HCT116 (cell line): ENCODE measurements at regions of chr10 and their contacts with region 1.

Region 1: GRCh38 chr10:90592638-90593302 is 265.1 kb downstream of the HTR7 start:
- DNase-seq: peak; percentile 68
- ATAC-seq: peak; percentile 85
- H3K4me3 ChIP-seq: no peak overlapping the region
- H3K27ac ChIP-seq: peak overlapping the region; percentile 81
- H3K4me1 ChIP-seq: peaks cover 34 to 56% of the 10 kb centered on the region in 2 experiments
- H3K27me3 ChIP-seq: no peaks in the 10 kb centered on the region
- CTCF ChIP-seq: peak; percentile 65 to 76 (median 71); a peak in 5 of 6 replicates
- POLR2A ChIP-seq: no peak
- RAD21 ChIP-seq: peak; percentile 96

Region 2: DNA sequence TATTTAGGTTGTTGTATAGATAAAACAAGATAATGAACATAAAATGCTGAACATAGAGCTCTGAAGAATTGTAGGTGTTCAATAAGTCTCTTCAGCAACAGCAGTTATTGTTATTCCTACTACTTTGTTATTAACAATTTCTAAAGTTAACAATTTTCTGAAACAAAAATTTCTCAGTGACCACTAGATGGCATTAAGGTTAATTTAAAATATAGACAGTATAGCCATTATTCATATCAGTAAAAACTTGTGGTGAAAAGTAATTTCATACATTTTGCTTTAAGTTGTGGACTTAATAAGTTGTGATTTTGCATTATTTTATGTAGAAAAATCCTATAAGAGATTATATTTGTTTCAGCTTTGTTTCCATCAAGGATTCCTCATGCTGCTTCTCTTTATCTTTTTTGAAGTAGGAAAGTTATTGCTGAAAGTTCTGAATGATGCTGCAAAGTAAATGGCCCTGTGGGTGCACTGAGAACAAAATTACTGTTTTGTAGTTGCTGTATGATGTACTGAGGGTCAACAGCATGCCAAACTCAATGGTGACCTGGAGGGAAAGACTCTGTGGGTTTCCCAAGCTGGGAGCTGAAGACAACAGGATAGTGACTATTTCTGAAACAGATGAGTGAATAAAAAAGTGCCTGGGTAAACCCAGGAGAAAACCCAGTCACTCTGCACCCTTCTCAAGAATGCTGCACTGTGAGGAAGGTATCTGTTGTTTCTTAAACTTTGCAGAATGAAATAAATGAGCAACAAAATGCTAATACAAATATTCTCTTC is 637.8 kb before region 1 on chr10:
- CTCF ChIA-PET with region 1: no interaction called
- POLR2A ChIA-PET with region 1: no interaction called
- RAD21 ChIA-PET with region 1: no interaction called
- intact Hi-C with region 1: loop called (anchors 2 kb)
- DNase-seq: no peak
- ATAC-seq: no peak
- H3K4me3 ChIP-seq: no peak overlapping the region
- H3K27ac ChIP-seq: peak overlapping the region; percentile 31; the same call in 1 of the 2 replicates
- H3K4me1 ChIP-seq: peaks cover 0 to 7% of the 10 kb centered on the region in 2 experiments; a peak in 2 of 4 replicates
- H3K27me3 ChIP-seq: no peaks in the 10 kb centered on the region
- CTCF ChIP-seq: peak; percentile 18 to 64 (median 37); a peak in 4 of 6 replicates
- POLR2A ChIP-seq: no peak
- RAD21 ChIP-seq: peak; percentile 59

Region 3: GRCh38 chr10:90148116-90148855 is 444.5 kb before region 1 on chr10:
- CTCF ChIA-PET with region 1: interaction called, 24 read pairs
- POLR2A ChIA-PET with region 1: no interaction called
- RAD21 ChIA-PET with region 1: interaction called, 6 to 7 read pairs
- intact Hi-C with region 1: loop called (anchors 1 kb)
- DNase-seq: peak; percentile 71
- ATAC-seq: peak; percentile 82
- H3K4me3 ChIP-seq: peak overlapping the region in 1 of 2 experiments; percentile 6; a peak in 1 of 4 replicates
- H3K27ac ChIP-seq: peak overlapping the region; percentile 90
- H3K4me1 ChIP-seq: peaks cover 38 to 52% of the 10 kb centered on the region in 2 experiments
- H3K27me3 ChIP-seq: no peaks in the 10 kb centered on the region
- CTCF ChIP-seq: peak; percentile 50 to 76 (median 75); a peak in 5 of 6 replicates
- POLR2A ChIP-seq: no peak
- RAD21 ChIP-seq: peak; percentile 90

Region 4: DNA sequence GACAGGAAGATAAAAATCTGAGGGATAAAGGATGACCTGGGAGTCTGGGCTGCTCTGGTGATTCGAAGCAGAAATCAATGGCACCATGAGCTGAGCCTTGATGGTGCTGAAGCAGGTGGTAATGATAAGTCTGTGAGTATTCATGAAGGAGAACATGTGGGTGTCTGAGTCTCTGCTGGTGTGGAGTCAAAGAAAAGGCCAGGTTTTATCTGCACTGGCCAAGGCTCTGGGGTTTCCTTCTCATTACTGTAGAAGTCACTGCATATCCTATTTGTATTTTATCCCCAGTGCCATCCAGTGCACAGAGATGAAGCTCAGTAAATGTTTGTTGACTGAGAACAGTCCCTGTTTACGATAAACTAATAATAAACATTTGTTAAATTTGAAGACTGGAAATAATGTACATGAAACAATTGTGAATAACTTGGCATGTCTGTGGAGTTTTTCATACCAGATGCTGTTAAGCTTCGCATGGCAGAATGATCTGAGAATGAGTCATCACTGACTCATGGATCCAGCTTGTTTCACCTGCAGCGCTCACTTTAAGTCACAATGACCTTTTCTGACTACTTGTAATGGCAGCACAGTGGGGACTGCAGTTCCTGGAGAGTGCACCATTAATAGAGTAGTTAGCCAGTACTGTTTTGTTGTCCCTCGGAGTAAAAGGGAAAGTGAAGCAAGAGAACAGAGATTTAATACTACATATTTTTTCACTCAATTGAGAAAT is 273.4 kb before region 1 on chr10:
- CTCF ChIA-PET with region 1: interaction called, 3 read pairs
- POLR2A ChIA-PET with region 1: interaction called, 3 read pairs
- RAD21 ChIA-PET with region 1: no interaction called
- intact Hi-C with region 1: loop called (anchors 5 kb)
- DNase-seq: peak; percentile 96
- ATAC-seq: peak; percentile 87
- H3K4me3 ChIP-seq: no peak overlapping the region
- H3K27ac ChIP-seq: peak overlapping the region; percentile 99
- H3K4me1 ChIP-seq: peaks cover 64 to 74% of the 10 kb centered on the region in 2 experiments
- H3K27me3 ChIP-seq: no peaks in the 10 kb centered on the region
- CTCF ChIP-seq: no peak
- POLR2A ChIP-seq: no peak
- RAD21 ChIP-seq: peak; percentile 39

Region 5: GRCh38 chr10:90560331-90560730 is 32.4 kb before region 1 on chr10:
- CTCF ChIA-PET with region 1: no interaction called
- POLR2A ChIA-PET with region 1: no interaction called
- RAD21 ChIA-PET with region 1: no interaction called
- intact Hi-C with region 1: no loop called
- DNase-seq: no peak
- ATAC-seq: no peak
- H3K4me3 ChIP-seq: no peak overlapping the region
- H3K27ac ChIP-seq: no peak overlapping the region
- H3K4me1 ChIP-seq: peaks cover 3 to 8% of the 10 kb centered on the region in 2 experiments; a peak in 3 of 4 replicates
- H3K27me3 ChIP-seq: no peaks in the 10 kb centered on the region
- CTCF ChIP-seq: no peak
- POLR2A ChIP-seq: no peak
- RAD21 ChIP-seq: no peak

Region 6: DNA sequence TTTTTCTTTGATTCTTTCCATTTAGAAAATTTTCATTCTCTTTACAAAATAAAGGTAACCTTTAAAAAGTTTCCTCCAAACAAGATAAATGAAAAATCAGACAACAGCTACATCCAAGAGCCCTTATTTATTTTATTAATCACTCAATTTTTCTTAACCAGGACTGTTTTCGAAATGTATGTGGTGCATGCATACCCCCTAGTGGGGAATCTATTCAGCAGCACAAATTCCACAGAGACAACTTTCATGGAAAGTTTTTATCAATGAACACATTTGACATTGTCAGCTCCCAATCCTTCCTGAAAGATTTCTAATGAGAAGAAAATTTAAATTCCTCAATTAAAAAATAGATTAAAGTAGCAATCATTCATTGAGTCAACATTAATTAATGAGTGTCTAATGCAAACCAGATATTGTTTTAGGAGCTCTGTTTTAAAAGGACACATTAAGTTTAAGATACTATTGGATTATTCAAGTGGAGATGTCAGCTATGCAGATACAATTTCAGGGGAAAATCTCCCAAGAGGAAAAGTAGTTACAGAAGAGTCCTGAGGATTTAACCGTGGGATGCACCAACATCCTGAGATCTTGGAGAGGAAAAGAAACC is 270.2 kb after region 1 on chr10:
- CTCF ChIA-PET with region 1: interaction called, 3 read pairs
- POLR2A ChIA-PET with region 1: no interaction called
- RAD21 ChIA-PET with region 1: no interaction called
- intact Hi-C with region 1: loop called (anchors 5 kb)
- DNase-seq: no peak
- ATAC-seq: no peak
- H3K4me3 ChIP-seq: no peak overlapping the region
- H3K27ac ChIP-seq: no peak overlapping the region
- H3K4me1 ChIP-seq: peaks cover 18 to 31% of the 10 kb centered on the region in 2 experiments
- H3K27me3 ChIP-seq: no peaks in the 10 kb centered on the region
- CTCF ChIP-seq: peak; percentile 76 to 90 (median 90)
- POLR2A ChIP-seq: no peak
- RAD21 ChIP-seq: peak; percentile 91